CD8-positive, alpha-beta memory T cell (primary cell): ENCODE measurements at regions of chr11 and their contacts with region 1.

Region 1: GRCh38 chr11:119067371-119068222 is at the start of gene VPS11:
- DNase-seq: peak; percentile 96 to 99 (median 98)
- H3K4me3 ChIP-seq: peak within 1 kb of the TSS; percentile 97
- H3K4me3 Mint-ChIP-seq: peak within 1 kb of the TSS; percentile 90 to 99 (median 94)
- H3K27ac ChIP-seq: peak within 1 kb of the TSS; percentile 88
- H3K27ac Mint-ChIP-seq: peak within 1 kb of the TSS; percentile 95 to 100 (median 98)
- H3K4me1 ChIP-seq: peaks cover 28% of the 10 kb centered on the region
- H3K4me1 Mint-ChIP-seq: peaks cover 32 to 52% (median 42%) of the 10 kb centered on the region in 3 donors
- H3K27me3 ChIP-seq: no peaks in the 10 kb centered on the region
- H3K27me3 Mint-ChIP-seq: no peaks in the 10 kb centered on the region
- total RNA-seq, gene VPS11: 25.3 to 26.0 TPM

Region 2: GRCh38 chr11:119057000-119057769 is 10.4 kb before region 1 on chr11 and contains the start of gene HYOU1:
- CTCF ChIA-PET with region 1: interaction called, 23 read pairs
- POLR2A ChIA-PET with region 1: interaction called, 30 read pairs
- DNase-seq: peak; percentile 98 to 99 (median 98)
- H3K4me3 ChIP-seq: peak within 1 kb of the TSS; percentile 84
- H3K4me3 Mint-ChIP-seq: peak within 1 kb of the TSS; percentile 91 to 99 (median 95)
- H3K27ac ChIP-seq: peak within 1 kb of the TSS; percentile 82
- H3K27ac Mint-ChIP-seq: peak within 1 kb of the TSS; percentile 85 to 99 (median 98)
- H3K4me1 ChIP-seq: peaks cover 22% of the 10 kb centered on the region
- H3K4me1 Mint-ChIP-seq: peaks cover 35 to 43% (median 43%) of the 10 kb centered on the region in 3 donors
- H3K27me3 ChIP-seq: no peaks in the 10 kb centered on the region
- H3K27me3 Mint-ChIP-seq: no peaks in the 10 kb centered on the region
- total RNA-seq, gene HYOU1: 181 TPM

Region 3: GRCh38 chr11:119084663-119085436 is 17.3 kb after region 1 on chr11 and contains the start of gene HMBS:
- CTCF ChIA-PET with region 1: interaction called, 8 read pairs
- POLR2A ChIA-PET with region 1: interaction called, 34 read pairs
- DNase-seq: peak; percentile 88 to 94 (median 90)
- H3K4me3 ChIP-seq: peak within 1 kb of the TSS; percentile 98
- H3K4me3 Mint-ChIP-seq: peak within 1 kb of the TSS; percentile 93 to 98 (median 95)
- H3K27ac ChIP-seq: peak within 1 kb of the TSS; percentile 89
- H3K27ac Mint-ChIP-seq: peak within 1 kb of the TSS; percentile 89 to 98 (median 96)
- H3K4me1 ChIP-seq: peaks cover 15% of the 10 kb centered on the region
- H3K4me1 Mint-ChIP-seq: peaks cover 17 to 25% (median 21%) of the 10 kb centered on the region in 3 donors
- H3K27me3 ChIP-seq: no peaks in the 10 kb centered on the region
- H3K27me3 Mint-ChIP-seq: no peaks in the 10 kb centered on the region
- total RNA-seq, gene HMBS: 35.5 to 38.4 TPM

Region 4: DNA sequence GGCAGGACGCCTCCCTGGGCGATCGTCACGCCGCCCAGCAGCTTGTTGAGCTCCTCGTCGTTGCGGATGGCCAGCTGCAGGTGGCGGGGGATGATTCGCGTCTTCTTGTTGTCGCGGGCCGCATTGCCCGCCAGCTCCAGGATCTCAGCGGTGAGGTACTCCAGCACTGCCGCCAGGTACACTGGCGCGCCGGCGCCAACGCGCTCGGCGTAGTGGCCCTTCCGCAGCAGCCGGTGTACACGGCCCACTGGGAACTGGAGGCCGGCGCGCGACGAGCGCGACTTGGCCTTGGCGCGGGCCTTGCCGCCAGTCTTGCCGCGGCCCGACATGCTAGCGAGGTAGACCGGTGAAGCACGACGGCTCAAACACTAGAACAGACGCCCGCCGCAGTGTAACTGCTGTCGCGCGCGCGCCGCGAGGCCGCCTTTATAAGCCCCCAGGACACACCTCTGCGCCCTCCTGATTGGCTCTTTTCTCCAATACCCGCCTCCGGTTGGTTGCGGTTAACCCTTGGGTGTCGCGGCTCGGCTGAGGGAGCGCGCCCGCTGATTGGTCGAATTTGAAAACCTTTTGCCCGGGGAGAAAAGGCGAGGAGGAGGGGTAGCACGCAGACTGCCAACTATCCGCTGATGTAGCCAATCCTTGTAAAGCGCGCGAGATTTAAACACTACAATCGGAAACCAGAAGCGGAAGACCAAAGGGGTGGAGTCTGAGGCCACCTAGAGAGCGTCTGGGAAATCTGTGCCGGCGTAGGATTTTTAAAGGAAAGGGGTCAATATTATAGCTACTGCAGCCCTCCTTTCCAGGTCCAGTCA is 27.7 kb after region 1 on chr11:
- CTCF ChIA-PET with region 1: interaction called, 6 read pairs
- POLR2A ChIA-PET with region 1: interaction called, 16 read pairs
- DNase-seq: peak; percentile 99 to 100 (median 100)
- H3K4me3 ChIP-seq: peak overlapping the region; percentile 88
- H3K4me3 Mint-ChIP-seq: peak overlapping the region; percentile 84 to 97 (median 93)
- H3K27ac ChIP-seq: peak overlapping the region; percentile 84
- H3K27ac Mint-ChIP-seq: peak overlapping the region; percentile 55 to 96 (median 88)
- H3K4me1 ChIP-seq: peaks cover 26% of the 10 kb centered on the region
- H3K4me1 Mint-ChIP-seq: peaks cover 35 to 50% (median 50%) of the 10 kb centered on the region in 3 donors
- H3K27me3 ChIP-seq: no peaks in the 10 kb centered on the region
- H3K27me3 Mint-ChIP-seq: peaks cover 0 to 4% of the 10 kb centered on the region in 2 donors

Region 5: DNA sequence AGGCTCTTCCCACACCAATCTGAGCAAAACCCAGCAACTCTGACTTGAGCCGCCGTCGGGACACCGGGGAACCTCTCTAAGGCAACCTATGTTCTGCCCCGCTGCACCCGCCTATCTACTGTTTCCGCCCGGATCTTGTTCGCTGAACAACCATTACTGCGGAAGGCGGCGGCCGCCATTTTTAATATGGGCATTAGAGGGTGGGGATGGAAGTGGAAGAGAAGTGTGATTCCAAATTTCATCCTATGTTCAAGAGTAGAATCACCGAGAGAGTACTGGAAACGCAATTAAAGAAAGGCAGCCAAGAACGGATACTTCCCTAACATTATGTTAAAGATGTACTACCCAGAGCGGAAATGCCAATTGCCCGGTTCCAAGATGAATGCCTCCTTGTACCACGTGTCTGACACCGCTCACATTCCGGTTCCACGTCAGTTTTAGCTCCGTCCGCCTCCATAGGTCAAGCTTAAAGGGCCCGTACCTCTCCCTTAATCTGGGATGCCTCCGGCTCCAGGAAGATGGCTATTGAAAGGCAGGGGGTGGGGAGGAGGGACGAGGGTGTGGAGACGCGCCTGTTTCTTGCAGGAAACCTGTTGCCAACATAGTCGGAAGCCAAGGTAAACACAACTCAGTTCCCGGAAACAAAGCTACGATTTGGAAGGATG is 34.3 kb after region 1 on chr11 and contains the start of gene DPAGT1:
- CTCF ChIA-PET with region 1: interaction called, 5 read pairs
- POLR2A ChIA-PET with region 1: interaction called, 14 read pairs
- DNase-seq: peak; percentile 73 to 88 (median 82)
- H3K4me3 ChIP-seq: peak within 1 kb of the TSS; percentile 97
- H3K4me3 Mint-ChIP-seq: peak within 1 kb of the TSS; percentile 88 to 99 (median 98)
- H3K27ac ChIP-seq: peak within 1 kb of the TSS; percentile 95
- H3K27ac Mint-ChIP-seq: peak within 1 kb of the TSS; percentile 93 to 100 (median 98)
- H3K4me1 ChIP-seq: peaks cover 38% of the 10 kb centered on the region
- H3K4me1 Mint-ChIP-seq: peaks cover 41 to 66% (median 61%) of the 10 kb centered on the region in 3 donors
- H3K27me3 ChIP-seq: no peaks in the 10 kb centered on the region
- H3K27me3 Mint-ChIP-seq: no peaks in the 10 kb centered on the region
- total RNA-seq, gene DPAGT1: 69.7 to 78.6 TPM

Region 6: GRCh38 chr11:119144825-119145486 is 77.4 kb after region 1 on chr11:
- CTCF ChIA-PET with region 1: no interaction called
- POLR2A ChIA-PET with region 1: no interaction called
- DNase-seq: no peak
- H3K4me3 ChIP-seq: no peak overlapping the region
- H3K4me3 Mint-ChIP-seq: no peak overlapping the region
- H3K27ac ChIP-seq: no peak overlapping the region
- H3K27ac Mint-ChIP-seq: no peak overlapping the region
- H3K4me1 ChIP-seq: peaks cover 6% of the 10 kb centered on the region
- H3K4me1 Mint-ChIP-seq: peaks cover 9 to 16% (median 13%) of the 10 kb centered on the region in 3 donors
- H3K27me3 ChIP-seq: peaks cover 26% of the 10 kb centered on the region
- H3K27me3 Mint-ChIP-seq: peaks cover 26 to 50% of the 10 kb centered on the region in 2 donors

Region 7: DNA sequence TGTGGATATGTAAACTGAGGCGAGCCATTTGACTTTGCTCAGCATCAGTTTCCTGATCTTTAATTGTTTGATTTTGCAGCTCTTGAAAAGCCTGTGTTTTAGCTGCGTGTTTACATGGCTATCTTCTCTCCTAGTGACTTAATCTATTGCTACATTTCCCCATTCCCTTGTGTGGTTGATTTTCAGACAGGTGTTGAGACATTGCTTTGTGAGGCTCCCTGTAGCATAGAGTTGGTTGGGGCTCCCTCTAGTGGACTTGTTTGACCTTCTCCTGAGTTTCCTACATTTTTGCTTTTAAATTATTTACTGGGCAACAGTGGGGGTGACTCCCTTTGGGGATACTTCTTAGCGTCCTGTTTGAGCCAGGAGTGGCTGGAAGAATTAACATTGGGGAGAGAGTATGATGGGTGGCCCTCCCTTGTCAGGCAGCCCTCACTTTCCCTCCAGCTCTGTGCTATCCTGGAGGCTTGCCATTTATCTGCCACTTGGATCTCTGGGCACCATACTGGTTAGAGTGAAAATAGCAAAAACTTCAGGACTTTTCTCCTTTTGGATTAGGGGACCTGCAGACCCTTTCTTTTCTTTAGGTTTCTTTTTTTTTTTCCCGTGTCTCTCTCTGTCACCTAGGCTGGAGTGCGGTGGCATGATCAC is 129.4 kb after region 1 on chr11:
- CTCF ChIA-PET with region 1: interaction called, 17 read pairs
- POLR2A ChIA-PET with region 1: no interaction called
- DNase-seq: peak; percentile 39 to 76 (median 70)
- H3K4me3 ChIP-seq: no peak overlapping the region
- H3K4me3 Mint-ChIP-seq: peak overlapping the region in 1 of 7 donors; percentile 28
- H3K27ac ChIP-seq: no peak overlapping the region
- H3K27ac Mint-ChIP-seq: peak overlapping the region in 3 of 8 donors; percentile 1 to 76 (median 2)
- H3K4me1 ChIP-seq: no peaks in the 10 kb centered on the region
- H3K4me1 Mint-ChIP-seq: peaks cover 0 to 6% (median 4%) of the 10 kb centered on the region in 3 donors
- H3K27me3 ChIP-seq: no peaks in the 10 kb centered on the region
- H3K27me3 Mint-ChIP-seq: peaks cover 0 to 2% of the 10 kb centered on the region in 2 donors